ENCODE measurements at regions of chrX and their contacts with region 1.

Region 1: GRCh38 chrX:104136241-104137019 is 20.4 kb downstream of the SLC25A53 start:
- DNase-seq: peak; percentile 83
- H3K4me3 Mint-ChIP-seq: peak overlapping the region; percentile 67
- H3K27ac Mint-ChIP-seq: no peak overlapping the region
- H3K4me1 Mint-ChIP-seq: no peaks in the 10 kb centered on the region
- H3K27me3 Mint-ChIP-seq: peaks cover 34% of the 10 kb centered on the region
- CTCF ChIP-seq: peak; percentile 60

Region 2: DNA sequence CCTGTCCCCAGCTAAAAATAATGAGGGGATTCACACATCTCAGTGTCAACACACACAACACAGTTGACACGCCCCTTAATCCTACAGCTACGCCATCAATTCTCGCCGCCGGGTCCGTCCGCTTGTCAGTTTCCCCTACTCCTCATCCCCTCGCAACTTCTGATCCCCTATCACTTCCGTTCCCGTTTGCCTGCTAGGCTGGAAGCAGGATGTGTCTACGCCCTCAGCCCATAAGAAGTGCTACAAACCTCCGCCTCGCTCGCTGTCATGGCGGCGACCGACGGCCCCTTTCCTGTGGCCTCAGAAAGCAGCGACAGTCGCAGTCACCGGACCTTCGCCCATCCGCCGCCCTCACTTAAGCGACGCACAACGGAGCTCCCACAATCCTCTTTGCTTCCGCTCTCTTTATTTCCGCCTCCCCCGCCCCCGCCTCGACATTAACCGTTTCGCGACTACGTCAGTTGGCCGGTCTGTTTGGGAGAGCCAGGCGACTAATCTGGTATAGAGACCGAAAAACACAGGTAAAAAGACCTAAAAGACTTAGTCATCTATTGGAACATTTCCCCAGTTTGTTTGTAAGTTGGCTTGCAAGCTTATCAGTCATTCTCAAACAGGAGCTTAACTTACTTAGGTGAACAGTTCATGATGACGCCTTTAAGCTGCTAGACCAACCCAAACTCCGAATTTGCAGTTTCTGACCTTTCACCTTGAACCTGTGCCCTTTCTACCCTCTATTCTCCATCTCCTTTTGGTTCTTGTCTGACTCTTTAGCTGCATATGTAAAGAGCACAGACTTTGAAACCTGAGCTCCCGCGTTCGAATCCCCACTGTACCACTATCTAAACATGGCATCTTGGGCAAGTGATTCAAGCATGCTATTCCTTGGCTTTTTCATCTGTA is 20.4 kb after region 1 on chrX and contains the start of gene SLC25A53:
- CTCF ChIA-PET with region 1: interaction called, 10 read pairs
- POLR2A ChIA-PET with region 1: no interaction called
- intact Hi-C with region 1: no loop called
- DNase-seq: peak; percentile 77
- H3K4me3 Mint-ChIP-seq: peak within 1 kb of the TSS; percentile 86
- H3K27ac Mint-ChIP-seq: peak within 1 kb of the TSS; percentile 97
- H3K4me1 Mint-ChIP-seq: no peaks in the 10 kb centered on the region
- H3K27me3 Mint-ChIP-seq: peaks cover 36% of the 10 kb centered on the region
- CTCF ChIP-seq: no peak
- total RNA-seq, gene SLC25A53: 3.2 and 4.1 TPM in 2 replicates

Measured in MCF 10A (cell line).